ENCODE measurements at regions of chr1 and their contacts with region 1.

Region 1: DNA sequence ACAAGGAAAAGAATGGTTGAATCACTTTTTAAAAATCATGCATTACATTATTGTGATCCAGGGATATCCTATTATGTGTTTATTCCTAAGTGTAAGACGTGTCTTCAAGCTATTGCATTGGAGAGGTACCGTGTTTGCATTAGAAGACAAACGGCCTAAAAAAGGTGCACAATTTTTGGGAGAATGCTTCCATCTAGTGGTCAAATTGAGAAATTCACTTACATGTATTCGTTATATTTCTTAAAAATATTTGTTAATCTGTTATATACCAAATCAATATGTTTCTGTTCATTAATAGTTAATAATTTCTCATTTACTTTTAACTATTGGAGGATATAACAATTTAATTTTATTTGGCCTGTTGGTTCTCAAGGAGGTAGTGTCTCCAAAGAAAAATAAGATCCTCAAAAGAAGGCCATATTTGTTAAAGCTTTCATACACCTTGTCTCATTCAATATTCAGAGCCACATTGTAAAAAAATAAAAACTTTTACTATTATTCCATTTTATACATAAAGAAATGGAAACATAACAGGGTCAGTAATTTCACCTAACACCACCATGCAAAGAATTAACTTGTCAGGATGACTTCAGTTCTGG is 40.5 kb upstream of the KCTD3 start:
- DNase-seq: peak in 1 of 2 experiments; percentile 29
- H3K4me3 ChIP-seq: no peak overlapping the region
- H3K4me3 Mint-ChIP-seq: no peak overlapping the region
- H3K27ac Mint-ChIP-seq: no peak overlapping the region
- H3K4me1 ChIP-seq: peaks cover 7% of the 10 kb centered on the region; the same call in 1 of the 2 replicates
- H3K4me1 Mint-ChIP-seq: no peaks in the 10 kb centered on the region
- H3K27me3 ChIP-seq: no peaks in the 10 kb centered on the region
- H3K27me3 Mint-ChIP-seq: no peaks in the 10 kb centered on the region
- CTCF ChIP-seq: peak; percentile 51 to 73

Region 2: DNA sequence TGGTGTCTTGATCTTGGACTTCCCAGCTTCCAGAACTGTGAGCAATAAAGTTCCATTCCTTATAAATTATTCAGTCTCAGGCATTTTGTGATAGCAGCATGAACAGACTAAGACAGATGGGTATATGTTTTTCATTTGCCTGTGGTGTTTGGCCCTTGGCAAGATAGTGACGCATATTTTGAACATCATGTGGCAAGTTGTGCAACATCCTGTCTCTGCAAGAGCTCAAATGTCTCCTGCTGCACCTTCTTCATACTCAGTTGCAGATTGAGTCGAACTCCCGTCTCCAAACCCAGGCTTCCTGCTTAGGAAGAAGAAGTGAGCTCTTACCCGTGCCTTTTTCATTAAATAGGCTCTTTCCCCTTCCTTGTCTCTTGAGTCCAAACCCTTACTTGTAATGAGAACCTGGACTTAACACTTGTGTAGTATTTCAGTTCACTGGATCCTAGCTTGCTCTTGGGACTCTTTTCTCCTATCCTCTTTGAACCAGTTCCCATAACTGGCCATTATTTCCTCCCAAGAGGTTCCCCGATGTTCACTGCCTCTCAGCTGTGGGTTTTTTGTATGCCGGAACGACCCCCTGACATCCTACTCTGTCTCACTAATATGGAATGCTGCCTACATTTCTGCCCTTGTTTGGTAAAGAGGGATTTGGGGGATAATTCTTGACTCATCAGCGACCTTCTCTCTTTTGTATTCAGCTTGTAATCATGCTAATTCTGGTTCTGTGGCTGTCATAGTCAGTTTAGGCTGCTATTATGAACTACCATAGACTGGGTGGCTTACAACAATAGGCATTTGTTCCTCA is 569.1 kb before region 1 on chr1:
- CTCF ChIA-PET with region 1: no interaction called
- POLR2A ChIA-PET with region 1: no interaction called
- intact Hi-C with region 1: loop called (anchors 10 kb)
- DNase-seq: no peak
- H3K4me3 ChIP-seq: no peak overlapping the region
- H3K4me3 Mint-ChIP-seq: no peak overlapping the region
- H3K27ac Mint-ChIP-seq: no peak overlapping the region
- H3K4me1 ChIP-seq: no peaks in the 10 kb centered on the region
- H3K4me1 Mint-ChIP-seq: peaks cover 4% of the 10 kb centered on the region
- H3K27me3 ChIP-seq: no peaks in the 10 kb centered on the region
- H3K27me3 Mint-ChIP-seq: no peaks in the 10 kb centered on the region
- CTCF ChIP-seq: no peak

Region 3: GRCh38 chr1:215076318-215076717 is 450.3 kb before region 1 on chr1:
- CTCF ChIA-PET with region 1: no interaction called
- POLR2A ChIA-PET with region 1: no interaction called
- intact Hi-C with region 1: loop called (anchors 10 kb)
- DNase-seq: peak; percentile 46 to 56
- H3K4me3 ChIP-seq: no peak overlapping the region
- H3K4me3 Mint-ChIP-seq: no peak overlapping the region
- H3K27ac Mint-ChIP-seq: no peak overlapping the region
- H3K4me1 ChIP-seq: no peaks in the 10 kb centered on the region
- H3K4me1 Mint-ChIP-seq: no peaks in the 10 kb centered on the region
- H3K27me3 ChIP-seq: no peaks in the 10 kb centered on the region
- H3K27me3 Mint-ChIP-seq: peaks cover 11% of the 10 kb centered on the region
- CTCF ChIP-seq: peak in 1 of 2 experiments; percentile 46

Region 4: GRCh38 chr1:215146341-215146826 is 380.3 kb before region 1 on chr1:
- CTCF ChIA-PET with region 1: no interaction called
- POLR2A ChIA-PET with region 1: no interaction called
- intact Hi-C with region 1: loop called (anchors 2 kb)
- DNase-seq: peak in 1 of 2 experiments; percentile 29
- H3K4me3 ChIP-seq: no peak overlapping the region
- H3K4me3 Mint-ChIP-seq: no peak overlapping the region
- H3K27ac Mint-ChIP-seq: no peak overlapping the region
- H3K4me1 ChIP-seq: no peaks in the 10 kb centered on the region
- H3K4me1 Mint-ChIP-seq: no peaks in the 10 kb centered on the region
- H3K27me3 ChIP-seq: no peaks in the 10 kb centered on the region
- H3K27me3 Mint-ChIP-seq: no peaks in the 10 kb centered on the region
- CTCF ChIP-seq: peak; percentile 59 to 69

Region 5: GRCh38 chr1:215606564-215607168 is 80.0 kb after region 1 on chr1:
- CTCF ChIA-PET with region 1: no interaction called
- POLR2A ChIA-PET with region 1: no interaction called
- intact Hi-C with region 1: loop called (anchors 2 kb)
- DNase-seq: no peak
- H3K4me3 ChIP-seq: no peak overlapping the region
- H3K4me3 Mint-ChIP-seq: peak overlapping the region; percentile 44
- H3K27ac Mint-ChIP-seq: peak overlapping the region; percentile 68
- H3K4me1 ChIP-seq: peaks cover 38% of the 10 kb centered on the region
- H3K4me1 Mint-ChIP-seq: peaks cover 32% of the 10 kb centered on the region
- H3K27me3 ChIP-seq: no peaks in the 10 kb centered on the region
- H3K27me3 Mint-ChIP-seq: no peaks in the 10 kb centered on the region
- CTCF ChIP-seq: peak in 1 of 2 experiments; percentile 53